OCI-LY7 (cell line): ENCODE measurements at regions of chr3 and their contacts with region 1.

Region 1: GRCh38 chr3:34020726-34021680 is 222.6 kb downstream of the PDCD6IP start:
- DNase-seq: peak; percentile 82
- H3K4me3 ChIP-seq: peak overlapping the region; percentile 52
- H3K27ac ChIP-seq: peak overlapping the region; percentile 97
- H3K4me1 ChIP-seq: peaks cover 81% of the 10 kb centered on the region
- CTCF ChIP-seq: no peak

Region 2: GRCh38 chr3:32037929-32038267 is 1983.1 kb before region 1 on chr3:
- CTCF ChIA-PET with region 1: interaction called, 11 read pairs
- POLR2A ChIA-PET with region 1: no interaction called
- intact Hi-C with region 1: no loop called
- DNase-seq: no peak
- H3K4me3 ChIP-seq: no peak overlapping the region
- H3K27ac ChIP-seq: no peak overlapping the region
- H3K4me1 ChIP-seq: peaks cover 9% of the 10 kb centered on the region
- CTCF ChIP-seq: no peak

Region 3: DNA sequence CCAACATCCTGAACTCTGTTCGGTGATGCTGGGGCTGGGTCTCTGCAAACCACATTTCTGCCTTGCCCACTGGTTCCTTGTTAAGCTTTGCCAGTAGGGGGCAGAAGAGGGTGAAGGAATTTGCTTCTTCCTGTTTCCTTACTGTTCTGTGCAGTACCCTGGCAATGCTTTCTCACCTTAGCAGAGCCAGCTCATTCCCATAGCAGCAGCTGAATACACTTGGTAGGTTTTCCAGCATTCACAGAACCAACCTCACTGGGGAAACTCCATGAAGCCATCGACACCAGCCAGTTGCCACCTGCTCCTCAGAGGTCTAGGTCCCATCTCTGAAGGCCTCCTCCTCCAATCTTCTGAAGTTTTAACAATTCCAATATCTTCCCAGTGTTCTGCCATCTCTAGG is 85.9 kb after region 1 on chr3:
- CTCF ChIA-PET with region 1: interaction called, 12 read pairs
- POLR2A ChIA-PET with region 1: interaction called, 5 read pairs
- intact Hi-C with region 1: loop called (anchors 5 kb)
- DNase-seq: peak; percentile 61
- H3K4me3 ChIP-seq: no peak overlapping the region
- H3K27ac ChIP-seq: peak overlapping the region; percentile 43
- H3K4me1 ChIP-seq: peaks cover 56% of the 10 kb centered on the region
- CTCF ChIP-seq: peak; percentile 88